ENCODE measurements at regions of chrX and their contacts with region 1.

Region 1: GRCh38 chrX:107776649-107777535 is 641 bp upstream of the NCBP2L start:
- DNase-seq: peak; percentile 87
- H3K4me3 Mint-ChIP-seq: peak overlapping the region; percentile 76
- H3K27ac Mint-ChIP-seq: peak overlapping the region; percentile 41
- H3K4me1 Mint-ChIP-seq: peaks cover 18% of the 10 kb centered on the region
- H3K27me3 Mint-ChIP-seq: peaks cover 45% of the 10 kb centered on the region
- CTCF ChIP-seq: peak; percentile 75

Region 2: GRCh38 chrX:107118322-107119147 is 658.4 kb before region 1 on chrX and contains the start of gene RBM41:
- CTCF ChIA-PET with region 1: no interaction called
- POLR2A ChIA-PET with region 1: interaction called, 3 read pairs
- intact Hi-C with region 1: loop called (anchors 10 kb)
- DNase-seq: peak; percentile 84
- H3K4me3 Mint-ChIP-seq: peak within 1 kb of the TSS; percentile 92
- H3K27ac Mint-ChIP-seq: peak within 1 kb of the TSS; percentile 94
- H3K4me1 Mint-ChIP-seq: peaks cover 33% of the 10 kb centered on the region
- H3K27me3 Mint-ChIP-seq: peaks cover 74% of the 10 kb centered on the region
- CTCF ChIP-seq: no peak
- total RNA-seq, gene RBM41: 20.2 and 24.7 TPM in 2 replicates

Region 3: GRCh38 chrX:107672955-107673378 is 103.9 kb before region 1 on chrX:
- CTCF ChIA-PET with region 1: interaction called, 73 read pairs
- POLR2A ChIA-PET with region 1: interaction called, 129 read pairs
- intact Hi-C with region 1: loop called (anchors 1 kb)
- DNase-seq: peak; percentile 88
- H3K4me3 Mint-ChIP-seq: peak overlapping the region; percentile 45
- H3K27ac Mint-ChIP-seq: peak overlapping the region; percentile 90
- H3K4me1 Mint-ChIP-seq: peaks cover 24% of the 10 kb centered on the region
- H3K27me3 Mint-ChIP-seq: peaks cover 67% of the 10 kb centered on the region
- CTCF ChIP-seq: peak; percentile 45

Region 4: DNA sequence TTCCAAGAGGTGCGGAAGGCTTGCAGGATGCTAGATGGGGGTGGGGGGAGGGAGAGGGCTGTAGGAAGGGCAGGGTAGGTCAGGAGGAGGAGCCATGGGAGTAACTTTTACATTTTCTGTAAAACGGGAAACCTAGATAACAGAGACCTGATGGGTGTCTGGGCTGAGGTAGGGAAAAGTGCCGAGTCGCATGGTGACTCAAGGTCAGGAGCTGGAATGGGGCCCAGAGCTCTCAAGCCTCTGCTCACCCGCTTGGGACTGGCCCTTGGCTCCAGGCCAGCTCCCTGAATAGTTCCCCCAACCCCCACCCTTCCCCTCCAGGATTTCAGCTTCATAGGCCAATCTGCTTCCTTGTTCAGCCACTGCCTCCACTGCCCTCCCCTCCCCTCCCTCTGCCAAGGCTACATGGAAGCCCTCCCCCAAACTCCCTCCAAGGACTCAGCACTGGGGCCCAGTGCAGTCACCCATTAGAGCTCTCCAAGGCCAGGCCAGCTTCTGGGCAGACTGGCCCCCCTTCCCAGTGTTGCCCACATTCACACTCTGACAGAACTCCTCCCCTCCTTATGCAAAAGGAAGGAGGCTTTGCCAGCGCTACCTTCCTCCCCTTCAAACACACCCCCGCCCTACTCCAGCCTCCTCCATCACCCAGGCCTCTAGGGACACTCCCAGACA is 44.9 kb before region 1 on chrX:
- CTCF ChIA-PET with region 1: interaction called, 5 read pairs
- POLR2A ChIA-PET with region 1: interaction called, 5 read pairs
- intact Hi-C with region 1: loop called (anchors 1 kb)
- DNase-seq: peak; percentile 92
- H3K4me3 Mint-ChIP-seq: peak overlapping the region; percentile 24
- H3K27ac Mint-ChIP-seq: no peak overlapping the region
- H3K4me1 Mint-ChIP-seq: peaks cover 15% of the 10 kb centered on the region
- H3K27me3 Mint-ChIP-seq: peaks cover 65% of the 10 kb centered on the region
- CTCF ChIP-seq: no peak

Region 5: DNA sequence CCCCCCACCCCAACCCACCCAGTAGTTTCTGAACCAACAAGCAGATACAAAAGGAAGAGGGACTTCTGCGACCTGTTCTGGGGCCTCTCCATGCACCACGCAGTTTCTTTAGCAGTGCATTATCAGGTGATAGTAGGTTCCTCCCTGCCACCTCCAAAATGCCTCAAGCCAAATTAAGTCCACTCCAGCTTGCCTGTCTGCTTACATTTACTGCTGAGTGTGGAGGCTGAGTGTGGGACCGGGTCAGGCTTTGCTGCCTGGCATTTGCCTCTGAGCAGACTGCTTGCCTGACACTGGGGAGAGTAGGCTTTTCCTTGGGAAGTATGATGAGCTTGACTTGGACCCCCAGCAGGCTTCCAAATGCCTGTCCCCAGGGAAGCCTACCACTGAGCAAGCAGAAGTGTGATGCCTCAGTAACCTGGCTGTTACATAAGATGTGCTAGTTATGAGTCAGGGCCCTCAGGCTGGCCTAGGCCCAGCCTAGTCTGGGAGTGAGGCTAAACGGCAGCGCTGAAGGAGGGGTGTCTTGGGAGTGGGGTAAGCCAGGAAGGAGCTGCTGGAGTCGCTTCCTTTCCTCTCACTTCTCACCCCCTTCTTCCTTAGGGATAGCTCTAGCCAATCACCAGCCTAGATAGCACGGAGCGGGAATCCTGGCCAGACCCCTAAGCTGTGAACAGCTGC is 10.3 kb before region 1 on chrX:
- CTCF ChIA-PET with region 1: interaction called, 10 read pairs
- POLR2A ChIA-PET with region 1: interaction called, 9 read pairs
- intact Hi-C with region 1: no loop called
- DNase-seq: peak; percentile 78
- H3K4me3 Mint-ChIP-seq: no peak overlapping the region
- H3K27ac Mint-ChIP-seq: no peak overlapping the region
- H3K4me1 Mint-ChIP-seq: no peaks in the 10 kb centered on the region
- H3K27me3 Mint-ChIP-seq: peaks cover 64% of the 10 kb centered on the region
- CTCF ChIP-seq: no peak

Region 6: GRCh38 chrX:107935664-107936433 is 159.0 kb after region 1 on chrX:
- CTCF ChIA-PET with region 1: no interaction called
- POLR2A ChIA-PET with region 1: no interaction called
- intact Hi-C with region 1: no loop called
- DNase-seq: peak; percentile 64
- H3K4me3 Mint-ChIP-seq: peak overlapping the region; percentile 84
- H3K27ac Mint-ChIP-seq: peak overlapping the region; percentile 39
- H3K4me1 Mint-ChIP-seq: peaks cover 13% of the 10 kb centered on the region
- H3K27me3 Mint-ChIP-seq: peaks cover 51% of the 10 kb centered on the region
- CTCF ChIP-seq: no peak

Region 7: DNA sequence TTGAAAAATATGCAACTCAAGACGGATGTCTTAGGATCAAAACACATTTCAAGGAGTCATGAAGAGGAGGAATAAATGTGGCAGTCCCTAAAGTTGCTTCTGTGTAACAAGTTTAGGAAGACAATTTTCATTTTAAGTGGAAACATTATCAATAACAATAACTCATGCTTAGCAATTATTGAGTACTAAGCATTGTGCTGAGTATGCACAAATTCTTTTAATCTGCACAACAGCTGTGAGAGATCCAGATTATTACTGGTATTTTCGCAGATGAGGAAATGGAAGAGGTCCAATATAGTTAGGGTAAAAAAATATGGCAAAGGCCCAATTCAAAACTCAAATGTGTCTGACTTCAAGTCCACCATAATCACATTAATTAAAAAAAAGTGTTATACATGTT is 208.1 kb after region 1 on chrX:
- CTCF ChIA-PET with region 1: no interaction called
- POLR2A ChIA-PET with region 1: no interaction called
- intact Hi-C with region 1: no loop called
- DNase-seq: no peak
- H3K4me3 Mint-ChIP-seq: no peak overlapping the region
- H3K27ac Mint-ChIP-seq: no peak overlapping the region
- H3K4me1 Mint-ChIP-seq: no peaks in the 10 kb centered on the region
- H3K27me3 Mint-ChIP-seq: peaks cover 58% of the 10 kb centered on the region
- CTCF ChIP-seq: no peak

Region 8: GRCh38 chrX:108070891-108071290 is 294.0 kb after region 1 on chrX:
- CTCF ChIA-PET with region 1: no interaction called
- POLR2A ChIA-PET with region 1: no interaction called
- intact Hi-C with region 1: loop called (anchors 2 kb)
- DNase-seq: peak; percentile 77
- H3K4me3 Mint-ChIP-seq: no peak overlapping the region
- H3K27ac Mint-ChIP-seq: no peak overlapping the region
- H3K4me1 Mint-ChIP-seq: peaks cover 15% of the 10 kb centered on the region
- H3K27me3 Mint-ChIP-seq: peaks cover 71% of the 10 kb centered on the region
- CTCF ChIP-seq: no peak